Breast epithelium (tissue), 4 donors: ENCODE measurements at regions of chr4 and their contacts with region 1.

Region 1: DNA sequence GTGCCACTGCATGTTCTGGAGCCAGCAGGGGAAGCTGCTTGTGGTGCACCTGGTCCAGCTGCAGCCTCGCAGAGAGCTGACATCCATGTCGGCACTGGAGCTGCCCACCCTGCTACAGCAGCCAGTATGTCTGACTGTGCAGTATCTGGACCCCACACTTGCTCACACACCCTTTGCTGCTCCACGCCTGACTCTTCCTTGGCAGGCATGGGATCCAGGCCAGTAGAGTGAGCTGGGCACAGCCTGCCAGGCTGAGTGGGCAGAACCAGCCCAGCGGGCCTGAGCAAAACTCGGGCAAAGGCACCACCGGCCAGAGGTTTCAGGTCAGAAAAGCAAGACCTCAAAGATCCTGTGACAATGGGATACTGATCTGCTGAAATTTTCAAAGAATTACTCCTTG is 690.1 kb downstream of the STPG2 start:
- DNase-seq: no peak
- H3K4me3 ChIP-seq: no peak overlapping the region
- H3K27ac ChIP-seq: no peak overlapping the region
- H3K4me1 ChIP-seq: no peaks in the 10 kb centered on the region
- H3K27me3 ChIP-seq: no peaks in the 10 kb centered on the region
- CTCF ChIP-seq: no peak
- POLR2A ChIP-seq: no peak

Region 2: DNA sequence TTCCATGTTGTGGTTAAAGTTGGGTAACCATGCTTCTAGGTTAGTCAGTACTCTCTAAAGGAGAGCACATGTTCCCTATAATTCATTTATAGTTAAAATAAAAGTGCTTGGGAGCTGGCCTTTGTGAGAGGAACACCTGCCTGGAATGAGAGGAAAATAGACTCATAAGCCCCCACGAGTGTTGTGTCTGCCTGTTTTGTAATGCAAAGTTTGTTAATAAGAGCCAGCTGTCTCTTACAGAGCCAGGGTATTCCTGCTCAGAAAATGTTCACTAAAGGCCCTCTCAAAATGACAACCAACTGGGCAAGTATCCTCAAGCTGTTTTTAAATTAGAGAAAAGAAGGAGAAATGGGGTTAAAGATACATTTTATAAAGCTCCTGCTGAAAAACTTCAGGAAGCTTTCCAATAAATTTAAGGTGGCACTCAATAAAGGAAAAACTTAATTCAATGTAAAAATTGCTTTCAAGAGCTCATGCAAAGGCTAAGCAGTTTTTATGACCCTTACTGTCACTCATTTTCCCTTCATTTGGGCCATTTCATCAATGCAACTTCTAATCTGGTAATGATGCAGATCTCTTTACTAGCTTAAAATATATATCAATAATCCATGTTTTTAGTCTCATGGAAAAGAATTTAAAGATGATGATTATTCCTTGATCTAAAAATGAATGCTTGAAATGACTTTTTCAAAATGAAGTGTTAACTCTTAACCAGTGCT is 103.6 kb before region 1 on chr4:
- intact Hi-C with region 1: loop called (anchors 10 kb)
- DNase-seq: no peak
- H3K4me3 ChIP-seq: no peak overlapping the region
- H3K27ac ChIP-seq: no peak overlapping the region
- H3K4me1 ChIP-seq: no peaks in the 10 kb centered on the region
- H3K27me3 ChIP-seq: no peaks in the 10 kb centered on the region
- CTCF ChIP-seq: no peak
- POLR2A ChIP-seq: no peak